Prostate gland (tissue), 2 donors: ENCODE measurements at regions of chr7 and their contacts with region 1.

Region 1: GRCh38 chr7:29921404-29922010 is 68.1 kb downstream of the SCRN1 start:
- DNase-seq: peak; percentile 39
- H3K4me3 ChIP-seq: no peak overlapping the region
- H3K27ac ChIP-seq: no peak overlapping the region
- H3K4me1 ChIP-seq: no peaks in the 10 kb centered on the region
- H3K27me3 ChIP-seq: no peaks in the 10 kb centered on the region
- CTCF ChIP-seq: peak; percentile 75 to 93 (median 81)
- POLR2A ChIP-seq: no peak

Region 2: DNA sequence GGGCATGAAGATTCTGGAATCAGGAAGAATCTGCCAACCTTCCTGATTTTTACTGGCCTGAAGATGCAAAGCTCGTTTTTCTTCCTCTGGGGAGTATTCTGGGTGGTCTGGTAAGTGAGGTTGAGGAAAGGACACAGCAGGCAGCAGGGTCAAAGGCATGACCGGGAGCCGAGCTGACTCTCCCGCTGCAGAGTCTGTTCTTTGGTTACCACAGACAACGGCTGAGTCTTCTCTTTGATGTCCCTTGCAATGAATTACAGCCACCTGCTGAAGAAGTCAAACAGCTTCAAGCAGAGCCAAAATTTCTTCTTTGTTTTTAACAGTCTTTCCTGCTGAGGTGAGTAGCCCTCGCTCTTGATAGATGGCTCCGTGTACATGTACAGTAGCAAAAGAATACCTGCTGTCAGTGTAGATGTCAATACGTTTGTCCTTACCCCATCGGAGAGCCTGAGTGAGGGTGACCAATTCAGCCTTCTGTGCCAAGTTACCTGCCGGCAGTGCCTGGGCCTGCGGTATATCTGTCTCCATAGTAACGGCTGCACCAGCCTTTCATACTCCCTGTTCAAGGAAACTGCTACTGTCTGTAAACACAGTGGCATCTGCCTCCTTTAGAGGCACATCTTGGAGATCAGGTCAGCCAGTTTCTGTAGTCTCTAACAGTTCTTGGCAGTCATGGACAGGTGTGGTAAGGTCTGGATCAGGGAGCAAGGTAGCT is 281.5 kb before region 1 on chr7:
- intact Hi-C with region 1: loop called (anchors 10 kb)
- DNase-seq: no peak
- H3K4me3 ChIP-seq: no peak overlapping the region
- H3K27ac ChIP-seq: no peak overlapping the region
- H3K4me1 ChIP-seq: no peaks in the 10 kb centered on the region
- H3K27me3 ChIP-seq: no peaks in the 10 kb centered on the region
- CTCF ChIP-seq: no peak
- POLR2A ChIP-seq: no peak

Region 3: GRCh38 chr7:29748286-29749108 is 173.0 kb before region 1 on chr7:
- intact Hi-C with region 1: loop called (anchors 5 kb)
- DNase-seq: no peak
- H3K4me3 ChIP-seq: no peak overlapping the region
- H3K27ac ChIP-seq: no peak overlapping the region
- H3K4me1 ChIP-seq: no peaks in the 10 kb centered on the region
- H3K27me3 ChIP-seq: no peaks in the 10 kb centered on the region
- CTCF ChIP-seq: peak in 3 of 4 experiments; percentile 40 to 59 (median 44)
- POLR2A ChIP-seq: no peak

Region 4: GRCh38 chr7:29878081-29878688 is 43.3 kb before region 1 on chr7:
- intact Hi-C with region 1: loop called (anchors 5 kb)
- DNase-seq: peak; percentile 43
- H3K4me3 ChIP-seq: no peak overlapping the region
- H3K27ac ChIP-seq: no peak overlapping the region
- H3K4me1 ChIP-seq: no peaks in the 10 kb centered on the region
- H3K27me3 ChIP-seq: peaks cover 3% of the 10 kb centered on the region
- CTCF ChIP-seq: peak; percentile 20 to 75 (median 62)
- POLR2A ChIP-seq: no peak